ENCODE measurements at regions of chr13 and their contacts with region 1.

Region 1: GRCh38 chr13:49996951-49997895 is at the start of gene TRIM13:
- DNase-seq: peak in 2 of 4 experiments; percentile 56 to 90
- ATAC-seq: peak; percentile 89
- H3K4me3 ChIP-seq: peak within 1 kb of the TSS; percentile 87
- H3K27ac ChIP-seq: peak within 1 kb of the TSS; percentile 98
- H3K4me1 ChIP-seq: peaks cover 5 to 7% of the 10 kb centered on the region in 2 experiments; a peak in 4 of 5 replicates
- H3K27me3 ChIP-seq: no peaks in the 10 kb centered on the region
- CTCF ChIP-seq: peak; percentile 78 to 93 (median 79)
- EP300 ChIP-seq: no peak
- POLR2A ChIP-seq: peak; percentile 88
- RAD21 ChIP-seq: peak; percentile 40 to 61
- polyA plus RNA-seq, gene TRIM13: 19.9 to 24.8 TPM

Region 2: GRCh38 chr13:50410921-50411712 is 413.9 kb after region 1 on chr13:
- CTCF ChIA-PET with region 1: no interaction called
- POLR2A ChIA-PET with region 1: no interaction called
- in situ Hi-C with region 1: loop called (anchors 25 kb)
- intact Hi-C with region 1: no loop called
- DNase-seq: peak; percentile 48 to 91 (median 67)
- ATAC-seq: peak; percentile 97
- H3K4me3 ChIP-seq: no peak overlapping the region
- H3K27ac ChIP-seq: peak overlapping the region; percentile 62; the same call in 2 of the 3 replicates
- H3K4me1 ChIP-seq: peaks cover 5 to 19% of the 10 kb centered on the region in 2 experiments; a peak in 4 of 5 replicates
- H3K27me3 ChIP-seq: no peaks in the 10 kb centered on the region
- CTCF ChIP-seq: 0 out of 6 replicates have a peak, but pooled peaks of 1 of the 3 experiments have one; percentile 3
- EP300 ChIP-seq: peak; percentile 56; the same call in 1 of the 2 replicates
- POLR2A ChIP-seq: no peak
- RAD21 ChIP-seq: peak in 1 of 2 experiments; percentile 20; a peak in 1 of 4 replicates

Region 3: DNA sequence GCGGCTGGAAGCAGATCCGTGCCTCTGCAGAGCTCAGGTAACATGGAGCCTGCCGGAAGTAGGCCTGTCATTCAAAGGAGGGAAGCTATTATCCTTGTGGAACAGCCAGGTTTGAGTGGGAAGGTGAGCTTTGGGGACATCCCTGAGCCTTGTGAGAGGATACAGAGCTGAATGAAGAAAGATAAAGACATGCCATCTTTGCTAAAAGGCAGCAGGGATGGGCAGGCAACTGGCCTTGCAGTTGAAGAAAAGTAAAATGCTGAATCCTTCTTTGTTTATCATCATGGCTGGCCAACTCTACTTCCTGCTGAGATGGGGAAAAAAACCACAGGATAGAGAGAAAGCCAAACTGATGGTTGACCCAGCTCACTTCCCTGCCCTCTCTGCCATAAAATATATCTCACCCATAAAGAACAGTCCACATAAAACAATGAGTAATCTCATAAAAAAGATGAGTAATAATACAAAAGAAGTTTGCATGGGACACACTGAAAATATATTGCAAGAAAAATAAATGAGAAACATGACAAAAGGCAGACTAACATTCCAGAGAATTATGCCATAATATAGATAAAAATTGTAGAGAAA is 620.0 kb after region 1 on chr13:
- CTCF ChIA-PET with region 1: no interaction called
- POLR2A ChIA-PET with region 1: no interaction called
- in situ Hi-C with region 1: no loop called
- intact Hi-C with region 1: loop called (anchors 10 kb)
- DNase-seq: no peak
- ATAC-seq: no peak
- H3K4me3 ChIP-seq: no peak overlapping the region
- H3K27ac ChIP-seq: no peak overlapping the region
- H3K4me1 ChIP-seq: peaks cover 3 to 23% of the 10 kb centered on the region in 2 experiments; a peak in 3 of 5 replicates
- H3K27me3 ChIP-seq: no peaks in the 10 kb centered on the region
- CTCF ChIP-seq: no peak
- EP300 ChIP-seq: no peak
- POLR2A ChIP-seq: no peak
- RAD21 ChIP-seq: no peak